ENCODE measurements at regions of chr1 and their contacts with region 1.

Region 1: DNA sequence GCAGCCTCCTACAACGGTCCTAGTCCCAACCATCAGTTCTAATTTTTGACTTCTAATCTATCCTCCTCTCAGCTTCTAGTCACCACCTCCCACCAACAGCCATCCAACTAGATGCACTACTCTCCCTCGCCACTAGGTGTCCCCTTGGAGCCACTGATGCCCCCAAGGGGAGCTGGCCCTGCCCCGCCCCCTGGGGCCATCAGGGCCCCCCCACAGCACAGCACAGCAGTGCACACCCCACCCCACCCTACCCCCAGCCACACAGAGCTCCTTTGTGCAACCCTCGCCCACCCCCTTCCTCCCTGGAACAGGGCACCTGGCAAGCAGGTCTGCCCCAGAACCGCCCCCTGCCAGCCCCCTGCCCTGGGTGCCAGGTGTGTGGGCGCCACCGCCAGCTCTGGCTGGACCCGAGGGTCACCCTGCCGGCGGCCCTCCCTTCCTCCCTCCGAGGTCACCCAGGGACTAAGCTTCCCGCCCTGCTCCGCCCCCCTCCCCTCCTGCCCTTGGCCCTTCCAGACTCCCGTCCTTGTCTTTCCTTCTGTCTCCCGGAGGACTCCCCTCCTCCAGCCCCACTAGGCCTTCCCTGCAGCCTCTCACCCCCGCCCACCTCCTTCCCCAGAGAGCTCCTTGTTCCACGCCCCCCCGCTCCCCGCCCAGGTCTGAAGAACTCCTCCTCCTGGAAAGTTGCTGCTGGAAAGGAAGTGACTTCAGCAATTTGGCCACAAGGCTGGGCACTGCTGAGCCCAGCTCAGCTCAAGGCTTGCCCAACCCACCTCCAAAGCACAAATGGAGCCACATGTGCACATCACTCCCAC is 47.0 kb downstream of the AHDC1 start:
- DNase-seq: peak; percentile 62 to 85 (median 76)
- ATAC-seq: peak; percentile 96
- H3K4me3 ChIP-seq: no peak overlapping the region
- H3K4me3 Mint-ChIP-seq: peak overlapping the region; percentile 30
- H3K27ac ChIP-seq: no peak overlapping the region
- H3K27ac Mint-ChIP-seq: peak overlapping the region; percentile 58
- H3K4me1 ChIP-seq: peaks cover 24% of the 10 kb centered on the region
- H3K4me1 Mint-ChIP-seq: peaks cover 33% of the 10 kb centered on the region
- H3K27me3 ChIP-seq: no peaks in the 10 kb centered on the region
- H3K27me3 Mint-ChIP-seq: no peaks in the 10 kb centered on the region
- CTCF ChIP-seq: peak; percentile 95

Region 2: GRCh38 chr1:27402349-27402754 is 154.6 kb before region 1 on chr1:
- CTCF ChIA-PET with region 1: interaction called, 18 read pairs
- POLR2A ChIA-PET with region 1: no interaction called
- intact Hi-C with region 1: no loop called
- DNase-seq: peak in 3 of 9 experiments; percentile 23 to 50 (median 27)
- ATAC-seq: no peak
- H3K4me3 ChIP-seq: no peak overlapping the region
- H3K4me3 Mint-ChIP-seq: no peak overlapping the region
- H3K27ac ChIP-seq: peak overlapping the region in 1 of 2 experiments; percentile 31
- H3K27ac Mint-ChIP-seq: peak overlapping the region; percentile 91
- H3K4me1 ChIP-seq: peaks cover 19% of the 10 kb centered on the region
- H3K4me1 Mint-ChIP-seq: peaks cover 32% of the 10 kb centered on the region
- H3K27me3 ChIP-seq: no peaks in the 10 kb centered on the region
- H3K27me3 Mint-ChIP-seq: no peaks in the 10 kb centered on the region
- CTCF ChIP-seq: no peak

Region 3: DNA sequence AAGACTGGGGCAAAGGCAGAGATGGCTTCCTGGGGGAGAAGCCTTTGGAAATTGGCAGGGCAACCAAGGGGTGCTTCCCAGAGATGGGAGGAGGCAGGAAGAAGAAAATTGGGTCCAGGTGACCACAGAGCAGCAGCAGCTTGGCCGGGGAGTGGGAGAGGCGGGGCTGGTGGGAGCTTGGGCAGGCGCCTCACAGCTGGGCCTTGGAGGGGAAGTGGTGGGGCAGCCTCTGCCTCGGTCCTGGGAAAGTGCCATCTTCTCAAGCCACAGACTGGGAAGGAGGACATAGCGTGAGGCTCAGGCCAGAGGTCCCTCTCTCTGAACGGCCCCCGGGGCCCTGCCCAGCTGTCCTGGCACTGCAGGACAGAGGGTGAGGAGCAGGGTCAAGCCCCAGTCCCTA is 43.0 kb before region 1 on chr1:
- CTCF ChIA-PET with region 1: interaction called, 10 read pairs
- POLR2A ChIA-PET with region 1: no interaction called
- intact Hi-C with region 1: no loop called
- DNase-seq: no peak
- ATAC-seq: no peak
- H3K4me3 ChIP-seq: no peak overlapping the region
- H3K4me3 Mint-ChIP-seq: no peak overlapping the region
- H3K27ac ChIP-seq: no peak overlapping the region
- H3K27ac Mint-ChIP-seq: no peak overlapping the region
- H3K4me1 ChIP-seq: peaks cover 14% of the 10 kb centered on the region
- H3K4me1 Mint-ChIP-seq: peaks cover 19% of the 10 kb centered on the region
- H3K27me3 ChIP-seq: no peaks in the 10 kb centered on the region
- H3K27me3 Mint-ChIP-seq: no peaks in the 10 kb centered on the region
- CTCF ChIP-seq: no peak

Region 4: GRCh38 chr1:27542408-27543273 is 14.3 kb before region 1 on chr1:
- CTCF ChIA-PET with region 1: interaction called, 28 read pairs
- POLR2A ChIA-PET with region 1: no interaction called
- intact Hi-C with region 1: no loop called
- DNase-seq: no peak
- ATAC-seq: no peak
- H3K4me3 ChIP-seq: no peak overlapping the region
- H3K4me3 Mint-ChIP-seq: no peak overlapping the region
- H3K27ac ChIP-seq: no peak overlapping the region
- H3K27ac Mint-ChIP-seq: no peak overlapping the region
- H3K4me1 ChIP-seq: no peaks in the 10 kb centered on the region
- H3K4me1 Mint-ChIP-seq: peaks cover 3% of the 10 kb centered on the region
- H3K27me3 ChIP-seq: no peaks in the 10 kb centered on the region
- H3K27me3 Mint-ChIP-seq: no peaks in the 10 kb centered on the region
- CTCF ChIP-seq: no peak

Region 5: DNA sequence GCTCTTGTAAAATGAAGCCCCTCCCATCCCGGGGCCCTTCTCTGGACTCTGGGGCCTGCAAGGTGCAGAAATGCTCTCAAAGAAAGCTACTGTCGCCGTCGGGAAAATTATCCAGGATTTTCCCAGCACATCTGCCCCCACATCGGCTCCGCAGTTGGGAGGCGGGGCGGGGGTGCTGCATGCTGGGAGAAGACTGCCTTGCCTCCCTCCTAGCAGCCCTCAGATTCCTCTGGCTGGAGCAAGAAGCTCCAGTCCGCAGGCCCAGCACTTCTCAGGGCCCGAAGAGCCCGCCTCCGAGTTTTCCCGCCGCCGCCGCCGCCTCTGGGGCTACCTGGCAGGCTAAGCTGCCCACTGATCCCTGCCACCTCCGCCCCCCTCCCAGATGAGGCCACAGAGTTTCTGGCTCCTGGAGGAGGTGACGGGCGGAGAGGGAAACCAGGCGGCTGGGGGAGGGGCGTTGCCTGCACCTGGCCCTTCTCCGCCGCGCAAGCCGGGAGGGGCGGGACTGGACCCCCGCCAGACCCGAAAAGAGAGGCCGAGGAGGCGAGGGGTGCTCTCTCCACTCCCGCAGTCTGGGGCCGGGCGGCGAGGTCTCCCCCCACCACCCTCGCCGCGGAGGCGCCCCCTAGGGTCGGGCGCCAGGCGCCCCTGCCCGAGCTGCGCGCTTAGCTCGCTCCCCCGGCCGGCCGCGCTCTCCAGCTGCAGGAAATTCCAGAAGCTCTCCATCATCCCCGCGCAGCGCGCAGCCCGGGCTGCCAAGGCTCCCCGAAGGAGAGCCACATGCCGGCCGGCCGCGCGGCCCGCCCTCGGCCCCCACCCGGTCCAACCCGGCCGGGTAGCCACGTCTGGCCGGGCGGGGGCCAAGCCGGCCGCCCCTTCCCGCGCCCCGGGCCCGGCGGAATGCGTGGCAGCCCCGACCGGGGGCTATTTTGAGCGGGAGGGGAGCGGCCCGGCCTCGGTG is 18.2 kb after region 1 on chr1:
- CTCF ChIA-PET with region 1: interaction called, 19 read pairs
- POLR2A ChIA-PET with region 1: no interaction called
- intact Hi-C with region 1: no loop called
- DNase-seq: no peak
- ATAC-seq: no peak
- H3K4me3 ChIP-seq: no peak overlapping the region
- H3K4me3 Mint-ChIP-seq: no peak overlapping the region
- H3K27ac ChIP-seq: no peak overlapping the region
- H3K27ac Mint-ChIP-seq: no peak overlapping the region
- H3K4me1 ChIP-seq: no peaks in the 10 kb centered on the region
- H3K4me1 Mint-ChIP-seq: peaks cover 31% of the 10 kb centered on the region
- H3K27me3 ChIP-seq: no peaks in the 10 kb centered on the region
- H3K27me3 Mint-ChIP-seq: no peaks in the 10 kb centered on the region
- CTCF ChIP-seq: no peak

Region 6: GRCh38 chr1:27624467-27625178 is 67.6 kb after region 1 on chr1:
- CTCF ChIA-PET with region 1: no interaction called
- POLR2A ChIA-PET with region 1: no interaction called
- intact Hi-C with region 1: no loop called
- DNase-seq: peak in 2 of 9 experiments; percentile 26 to 52
- ATAC-seq: no peak
- H3K4me3 ChIP-seq: peak overlapping the region; percentile 28 to 77
- H3K4me3 Mint-ChIP-seq: no peak overlapping the region
- H3K27ac ChIP-seq: peak overlapping the region; percentile 10 to 84
- H3K27ac Mint-ChIP-seq: no peak overlapping the region
- H3K4me1 ChIP-seq: peaks cover 58% of the 10 kb centered on the region
- H3K4me1 Mint-ChIP-seq: peaks cover 33% of the 10 kb centered on the region
- H3K27me3 ChIP-seq: no peaks in the 10 kb centered on the region
- H3K27me3 Mint-ChIP-seq: no peaks in the 10 kb centered on the region
- CTCF ChIP-seq: no peak